ENCODE measurements at regions of chr16 and their contacts with region 1.

Region 1: GRCh38 chr16:11255737-11256660 is at the start of gene SOCS1:
- DNase-seq: peak; percentile 92
- H3K4me3 Mint-ChIP-seq: peak within 1 kb of the TSS; percentile 98
- H3K27ac Mint-ChIP-seq: peak within 1 kb of the TSS; percentile 99
- H3K4me1 Mint-ChIP-seq: peaks cover 48% of the 10 kb centered on the region
- H3K27me3 Mint-ChIP-seq: peaks cover 6% of the 10 kb centered on the region
- total RNA-seq, gene SOCS1: 146 to 152 TPM

Region 2: GRCh38 chr16:10971560-10971961 is 284.4 kb before region 1 on chr16:
- CTCF ChIA-PET with region 1: interaction called, 118 read pairs
- POLR2A ChIA-PET with region 1: interaction called, 93 read pairs
- intact Hi-C with region 1: loop called (anchors 1 kb)
- DNase-seq: peak; percentile 36
- H3K4me3 Mint-ChIP-seq: no peak overlapping the region
- H3K27ac Mint-ChIP-seq: no peak overlapping the region
- H3K4me1 Mint-ChIP-seq: peaks cover 49% of the 10 kb centered on the region
- H3K27me3 Mint-ChIP-seq: no peaks in the 10 kb centered on the region

Region 3: GRCh38 chr16:11051879-11052808 is 203.9 kb before region 1 on chr16:
- CTCF ChIA-PET with region 1: interaction called, 11 read pairs
- POLR2A ChIA-PET with region 1: interaction called, 18 read pairs
- intact Hi-C with region 1: loop called (anchors 1 kb)
- DNase-seq: peak; percentile 94
- H3K4me3 Mint-ChIP-seq: peak overlapping the region; percentile 24
- H3K27ac Mint-ChIP-seq: peak overlapping the region; percentile 94
- H3K4me1 Mint-ChIP-seq: peaks cover 64% of the 10 kb centered on the region
- H3K27me3 Mint-ChIP-seq: no peaks in the 10 kb centered on the region

Region 4: GRCh38 chr16:11105038-11105903 is 150.7 kb before region 1 on chr16:
- CTCF ChIA-PET with region 1: interaction called, 6 read pairs
- POLR2A ChIA-PET with region 1: interaction called, 18 read pairs
- intact Hi-C with region 1: loop called (anchors 1 kb)
- DNase-seq: peak; percentile 69
- H3K4me3 Mint-ChIP-seq: peak overlapping the region; percentile 56
- H3K27ac Mint-ChIP-seq: peak overlapping the region; percentile 97
- H3K4me1 Mint-ChIP-seq: peaks cover 72% of the 10 kb centered on the region
- H3K27me3 Mint-ChIP-seq: no peaks in the 10 kb centered on the region

Region 5: GRCh38 chr16:11175787-11176341 is 80.1 kb before region 1 on chr16:
- CTCF ChIA-PET with region 1: interaction called, 3 read pairs
- POLR2A ChIA-PET with region 1: no interaction called
- intact Hi-C with region 1: loop called (anchors 5 kb)
- DNase-seq: peak; percentile 79
- H3K4me3 Mint-ChIP-seq: no peak overlapping the region
- H3K27ac Mint-ChIP-seq: peak overlapping the region; percentile 87
- H3K4me1 Mint-ChIP-seq: peaks cover 50% of the 10 kb centered on the region
- H3K27me3 Mint-ChIP-seq: no peaks in the 10 kb centered on the region

Region 6: GRCh38 chr16:11232852-11233726 is 22.9 kb before region 1 on chr16:
- CTCF ChIA-PET with region 1: interaction called, 9 read pairs
- POLR2A ChIA-PET with region 1: interaction called, 47 read pairs
- intact Hi-C with region 1: loop called (anchors 1 kb)
- DNase-seq: peak; percentile 97
- H3K4me3 Mint-ChIP-seq: peak overlapping the region; percentile 62
- H3K27ac Mint-ChIP-seq: peak overlapping the region; percentile 99
- H3K4me1 Mint-ChIP-seq: peaks cover 74% of the 10 kb centered on the region
- H3K27me3 Mint-ChIP-seq: no peaks in the 10 kb centered on the region

Region 7: GRCh38 chr16:11370084-11370931 is 114.3 kb after region 1 on chr16:
- CTCF ChIA-PET with region 1: interaction called, 29 read pairs
- POLR2A ChIA-PET with region 1: interaction called, 4 read pairs
- intact Hi-C with region 1: no loop called
- DNase-seq: peak; percentile 38
- H3K4me3 Mint-ChIP-seq: no peak overlapping the region
- H3K27ac Mint-ChIP-seq: no peak overlapping the region
- H3K4me1 Mint-ChIP-seq: peaks cover 11% of the 10 kb centered on the region
- H3K27me3 Mint-ChIP-seq: no peaks in the 10 kb centered on the region

Measured in activated CD4-positive, alpha-beta memory T cell treated with anti-CD3 and anti-CD28 coated beads for 36 hours (primary cell).